Panc1 (cell line): ENCODE measurements at regions of chr11 and their contacts with region 1.

Region 1: GRCh38 chr11:9573052-9573774 is at the start of gene WEE1:
- DNase-seq: peak; percentile 98
- ATAC-seq: peak; percentile 90
- H3K4me3 ChIP-seq: peak within 1 kb of the TSS; percentile 85 to 87
- H3K27ac ChIP-seq: peak within 1 kb of the TSS; percentile 99
- H3K4me1 ChIP-seq: peaks cover 50% of the 10 kb centered on the region
- H3K27me3 ChIP-seq: no peaks in the 10 kb centered on the region
- CTCF ChIP-seq: no peak
- total RNA-seq, gene WEE1: 67.9 TPM

Region 2: GRCh38 chr11:9460322-9461067 is 112.7 kb before region 1 on chr11 and contains the start of gene ZNF143:
- CTCF ChIA-PET with region 1: no interaction called
- POLR2A ChIA-PET with region 1: interaction called, 18 read pairs
- in situ Hi-C with region 1: no loop called
- intact Hi-C with region 1: loop called (anchors 5 kb)
- DNase-seq: peak; percentile 100
- ATAC-seq: peak; percentile 95
- H3K4me3 ChIP-seq: peak within 1 kb of the TSS; percentile 94
- H3K27ac ChIP-seq: peak within 1 kb of the TSS; percentile 100
- H3K4me1 ChIP-seq: peaks cover 23% of the 10 kb centered on the region
- H3K27me3 ChIP-seq: no peaks in the 10 kb centered on the region
- CTCF ChIP-seq: no peak
- total RNA-seq, gene ZNF143: 30.2 TPM

Region 3: DNA sequence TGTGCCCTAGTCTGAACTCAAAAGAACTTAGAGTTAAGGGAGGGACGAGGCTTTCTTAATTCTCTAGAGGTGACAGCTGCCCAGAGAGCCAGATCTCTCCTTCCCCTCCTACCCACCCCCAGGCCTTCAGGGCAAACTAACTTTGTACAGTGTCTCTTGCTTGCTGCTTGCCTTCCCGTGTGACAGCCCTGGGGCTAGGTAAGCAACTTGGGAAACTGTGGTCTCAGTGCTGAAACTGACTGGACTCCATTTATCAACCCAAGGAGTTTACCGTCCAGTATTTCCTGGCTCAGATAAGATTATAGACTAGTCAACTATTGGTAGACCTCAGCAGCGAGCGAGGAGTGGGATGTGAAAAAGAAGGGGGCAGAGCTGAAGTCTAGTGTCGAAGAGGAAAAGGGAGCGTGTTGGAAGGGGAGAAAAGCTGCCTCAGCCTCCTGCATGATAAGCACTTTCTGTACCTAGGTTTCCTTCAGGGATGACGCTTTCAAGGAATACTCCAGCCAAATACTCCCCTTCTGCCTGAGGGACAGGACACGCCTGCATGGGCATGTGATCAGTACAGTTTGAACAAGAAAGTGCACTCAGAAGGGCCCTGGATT is 43.1 kb before region 1 on chr11:
- CTCF ChIA-PET with region 1: interaction called, 4 read pairs
- POLR2A ChIA-PET with region 1: interaction called, 20 read pairs
- in situ Hi-C with region 1: no loop called
- intact Hi-C with region 1: no loop called
- DNase-seq: no peak
- ATAC-seq: peak; percentile 22; the same call in 1 of the 2 replicates
- H3K4me3 ChIP-seq: no peak overlapping the region
- H3K27ac ChIP-seq: peak overlapping the region; percentile 3
- H3K4me1 ChIP-seq: peaks cover 49% of the 10 kb centered on the region
- H3K27me3 ChIP-seq: no peaks in the 10 kb centered on the region
- CTCF ChIP-seq: no peak